ENCODE measurements at regions of chr3 and their contacts with region 1.

Region 1: GRCh38 chr3:186930641-186931531 is 560 bp downstream of the ST6GAL1 start:
- DNase-seq: peak; percentile 54
- H3K4me3 Mint-ChIP-seq: peak overlapping the region; percentile 87
- H3K27ac Mint-ChIP-seq: peak overlapping the region; percentile 90
- H3K4me1 Mint-ChIP-seq: peaks cover 49% of the 10 kb centered on the region
- H3K27me3 Mint-ChIP-seq: no peaks in the 10 kb centered on the region

Region 2: GRCh38 chr3:186783073-186783730 is 147.7 kb before region 1 on chr3 and contains the start of gene EIF4A2:
- intact Hi-C with region 1: loop called (anchors 1 kb)
- DNase-seq: peak; percentile 89
- H3K4me3 Mint-ChIP-seq: peak within 1 kb of the TSS; percentile 95
- H3K27ac Mint-ChIP-seq: peak within 1 kb of the TSS; percentile 94
- H3K4me1 Mint-ChIP-seq: peaks cover 41% of the 10 kb centered on the region
- H3K27me3 Mint-ChIP-seq: no peaks in the 10 kb centered on the region
- total RNA-seq, gene EIF4A2: 491 and 514 TPM in 2 replicates

Region 3: DNA sequence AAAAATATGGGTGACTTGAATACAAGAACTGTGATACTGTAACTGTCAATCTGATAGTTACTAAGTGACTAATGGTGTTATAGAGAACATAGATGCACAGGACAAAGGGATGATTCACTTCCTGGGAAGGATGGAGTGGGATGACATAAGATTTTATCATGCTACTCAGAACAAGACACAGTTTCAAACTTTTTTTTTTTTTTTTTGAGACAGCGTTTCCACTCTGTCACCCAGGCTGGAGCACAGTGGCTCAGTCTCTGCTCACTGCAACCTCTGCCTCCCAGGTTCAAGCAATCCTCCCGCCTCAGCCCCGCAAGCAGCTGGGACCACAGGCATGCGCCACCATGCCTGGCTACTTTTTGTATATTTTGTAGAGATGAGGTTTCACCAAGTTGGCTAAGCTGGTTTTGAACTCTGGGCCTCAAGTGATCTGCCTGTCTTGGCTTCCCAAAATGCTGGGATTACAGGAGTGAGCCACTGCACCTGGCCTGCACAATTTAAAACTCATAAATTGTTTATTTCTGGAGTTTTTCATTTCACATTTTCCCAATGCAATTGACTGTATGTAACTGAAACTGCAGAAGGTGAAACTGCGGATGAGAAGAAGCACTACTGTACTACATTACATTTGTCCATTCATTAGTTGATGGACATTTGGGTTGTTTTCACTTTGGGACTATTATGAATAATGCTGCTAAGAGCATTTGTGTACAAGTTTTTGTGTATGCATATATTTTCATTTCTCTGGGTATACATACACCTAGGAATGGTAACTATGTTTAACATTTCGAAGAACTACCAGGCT is 47.8 kb before region 1 on chr3:
- intact Hi-C with region 1: loop called (anchors 1 kb)
- DNase-seq: peak; percentile 31
- H3K4me3 Mint-ChIP-seq: peak overlapping the region; percentile 54
- H3K27ac Mint-ChIP-seq: peak overlapping the region; percentile 90
- H3K4me1 Mint-ChIP-seq: peaks cover 58% of the 10 kb centered on the region
- H3K27me3 Mint-ChIP-seq: no peaks in the 10 kb centered on the region

Region 4: GRCh38 chr3:187000711-187001151 is 69.8 kb after region 1 on chr3:
- intact Hi-C with region 1: loop called (anchors 1 kb)
- DNase-seq: peak; percentile 29
- H3K4me3 Mint-ChIP-seq: peak overlapping the region; percentile 30
- H3K27ac Mint-ChIP-seq: peak overlapping the region; percentile 90
- H3K4me1 Mint-ChIP-seq: peaks cover 86% of the 10 kb centered on the region
- H3K27me3 Mint-ChIP-seq: no peaks in the 10 kb centered on the region

Region 5: GRCh38 chr3:187066228-187066995 is 135.5 kb after region 1 on chr3:
- intact Hi-C with region 1: loop called (anchors 1 kb)
- DNase-seq: peak; percentile 29
- H3K4me3 Mint-ChIP-seq: no peak overlapping the region
- H3K27ac Mint-ChIP-seq: peak overlapping the region; percentile 67
- H3K4me1 Mint-ChIP-seq: peaks cover 55% of the 10 kb centered on the region
- H3K27me3 Mint-ChIP-seq: no peaks in the 10 kb centered on the region